Sigmoid colon (tissue), 7 donors: ENCODE measurements at regions of chr22 and their contacts with region 1.

Region 1: DNA sequence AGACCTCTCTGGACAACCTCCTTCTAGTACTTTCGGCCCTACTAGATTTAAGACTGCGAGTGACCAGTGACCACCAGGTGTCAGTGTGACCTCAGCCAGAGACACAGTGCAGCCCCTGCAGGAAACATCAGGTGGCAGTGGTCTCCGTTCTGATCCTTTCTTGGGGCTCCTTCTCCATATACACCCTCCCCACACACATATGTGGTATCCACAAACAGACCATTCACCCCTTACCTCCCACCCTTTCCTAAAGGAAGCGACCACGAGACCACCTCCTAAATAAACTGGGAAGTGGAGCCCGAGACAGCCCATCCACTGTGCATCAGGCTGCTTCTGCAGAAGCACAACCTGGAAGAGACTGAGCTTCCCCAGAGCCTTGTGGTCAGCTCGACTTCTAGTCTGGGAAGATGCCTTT is 38.5 kb upstream of the CYP2D6 start:
- DNase-seq: peak; percentile 78
- H3K4me3 ChIP-seq: no peak overlapping the region
- H3K27ac ChIP-seq: no peak overlapping the region
- H3K4me1 ChIP-seq: peaks cover 0 to 31% (median 19%) of the 10 kb centered on the region in 4 donors
- H3K27me3 ChIP-seq: no peaks in the 10 kb centered on the region
- CTCF ChIP-seq: peak; percentile 64 to 93 (median 88)
- EP300 ChIP-seq: no peak
- POLR2A ChIP-seq: no peak

Region 2: GRCh38 chr22:42270512-42271417 is 101.7 kb after region 1 on chr22 and contains the start of gene TCF20:
- intact Hi-C with region 1: loop called (anchors 5 kb)
- DNase-seq: peak; percentile 86
- H3K4me3 ChIP-seq: peak within 1 kb of the TSS; percentile 78 to 100 (median 96)
- H3K27ac ChIP-seq: peak within 1 kb of the TSS; percentile 84 to 88 (median 85)
- H3K4me1 ChIP-seq: peaks cover 0 to 23% (median 16%) of the 10 kb centered on the region in 4 donors
- H3K27me3 ChIP-seq: no peaks in the 10 kb centered on the region
- CTCF ChIP-seq: no peak
- EP300 ChIP-seq: no peak
- POLR2A ChIP-seq: no peak
- total RNA-seq, gene TCF20: 21.6 to 31.0 (median 25.1) TPM

Region 3: GRCh38 chr22:42437488-42438292 is 268.6 kb after region 1 on chr22:
- intact Hi-C with region 1: loop called (anchors 1 kb)
- DNase-seq: peak; percentile 87
- H3K4me3 ChIP-seq: peak overlapping the region in 3 of 4 donors; percentile 30 to 45 (median 38)
- H3K27ac ChIP-seq: peak overlapping the region in 1 of 4 donors; percentile 16
- H3K4me1 ChIP-seq: peaks cover 0 to 25% (median 22%) of the 10 kb centered on the region in 4 donors
- H3K27me3 ChIP-seq: peaks cover 0 to 6% (median 4%) of the 10 kb centered on the region in 3 donors
- CTCF ChIP-seq: peak; percentile 95 to 99 (median 98)
- EP300 ChIP-seq: no peak
- POLR2A ChIP-seq: no peak